MCF 10A (cell line): ENCODE measurements at regions of chr21 and their contacts with region 1.

Region 1: GRCh38 chr21:26124421-26124833 is 46.1 kb downstream of the APP start:
- DNase-seq: peak; percentile 41
- H3K4me3 Mint-ChIP-seq: peak overlapping the region; percentile 26
- H3K27ac Mint-ChIP-seq: peak overlapping the region; percentile 84
- H3K4me1 Mint-ChIP-seq: peaks cover 63% of the 10 kb centered on the region
- H3K27me3 Mint-ChIP-seq: no peaks in the 10 kb centered on the region
- CTCF ChIP-seq: no peak

Region 2: GRCh38 chr21:26072666-26073615 is 51.5 kb before region 1 on chr21:
- CTCF ChIA-PET with region 1: no interaction called
- POLR2A ChIA-PET with region 1: no interaction called
- intact Hi-C with region 1: no loop called
- DNase-seq: no peak
- H3K4me3 Mint-ChIP-seq: no peak overlapping the region
- H3K27ac Mint-ChIP-seq: no peak overlapping the region
- H3K4me1 Mint-ChIP-seq: peaks cover 31% of the 10 kb centered on the region
- H3K27me3 Mint-ChIP-seq: no peaks in the 10 kb centered on the region
- CTCF ChIP-seq: no peak

Region 3: DNA sequence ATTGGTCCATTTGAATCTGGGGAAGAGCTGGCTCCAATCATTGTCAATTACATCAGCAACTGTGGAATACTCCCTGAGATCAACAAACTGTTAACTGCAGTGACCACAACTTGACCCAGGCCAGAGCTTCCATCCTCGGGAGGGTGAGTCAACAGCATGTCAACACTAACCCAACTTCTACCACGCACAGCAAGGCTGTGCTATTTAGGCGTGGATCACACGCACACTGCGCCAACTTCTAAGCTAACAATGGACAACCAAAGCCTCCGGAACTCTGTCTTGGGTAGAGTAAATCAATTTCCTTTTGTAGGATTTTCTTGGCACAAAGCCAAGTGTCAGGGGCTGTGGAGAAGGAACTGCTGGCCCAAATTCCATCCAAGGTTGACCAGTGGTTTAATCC is 15.8 kb after region 1 on chr21:
- CTCF ChIA-PET with region 1: interaction called, 5 read pairs
- POLR2A ChIA-PET with region 1: interaction called, 13 read pairs
- intact Hi-C with region 1: no loop called
- DNase-seq: peak; percentile 91
- H3K4me3 Mint-ChIP-seq: peak overlapping the region; percentile 14
- H3K27ac Mint-ChIP-seq: peak overlapping the region; percentile 85
- H3K4me1 Mint-ChIP-seq: peaks cover 20% of the 10 kb centered on the region
- H3K27me3 Mint-ChIP-seq: no peaks in the 10 kb centered on the region
- CTCF ChIP-seq: no peak

Region 4: DNA sequence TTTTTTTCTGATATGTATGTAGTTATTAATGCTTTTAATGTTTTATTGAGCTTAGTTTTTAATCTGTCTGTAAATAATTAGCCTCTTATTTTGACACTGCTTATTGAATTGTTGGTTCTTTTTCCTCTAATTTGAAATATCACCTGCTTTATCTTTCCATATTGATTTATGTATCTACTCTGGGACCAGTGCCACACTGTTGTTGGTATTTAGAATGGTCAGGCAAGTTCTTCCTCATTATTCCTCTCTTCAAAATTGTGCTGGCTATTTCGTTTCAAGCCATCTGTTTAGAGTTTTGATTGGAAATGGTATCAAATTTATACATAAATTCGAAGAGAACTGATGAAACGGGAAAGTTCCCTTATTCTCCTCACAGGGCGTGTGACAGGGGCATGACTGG is 143.0 kb after region 1 on chr21:
- CTCF ChIA-PET with region 1: no interaction called
- POLR2A ChIA-PET with region 1: no interaction called
- intact Hi-C with region 1: no loop called
- DNase-seq: no peak
- H3K4me3 Mint-ChIP-seq: no peak overlapping the region
- H3K27ac Mint-ChIP-seq: no peak overlapping the region
- H3K4me1 Mint-ChIP-seq: peaks cover 6% of the 10 kb centered on the region
- H3K27me3 Mint-ChIP-seq: no peaks in the 10 kb centered on the region
- CTCF ChIP-seq: no peak

Region 5: DNA sequence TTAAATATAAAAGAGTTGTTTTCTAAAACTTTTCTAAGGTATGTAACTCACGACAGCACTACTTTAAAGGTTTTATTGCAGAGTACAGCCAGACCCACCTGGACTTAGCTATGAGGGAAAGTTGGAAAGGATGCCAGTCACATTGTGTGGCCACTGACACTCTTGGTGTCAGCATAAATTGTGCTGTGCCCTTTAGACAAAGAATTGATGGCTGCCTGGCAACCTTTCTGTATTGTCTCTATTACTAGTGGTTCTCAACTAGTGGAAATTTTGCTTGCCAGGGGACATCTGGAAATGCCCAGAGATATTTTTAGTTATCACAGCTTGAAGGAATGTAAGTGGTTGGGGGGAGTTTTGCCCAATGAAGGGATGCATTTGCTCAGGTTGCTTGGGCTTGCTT is 163.6 kb after region 1 on chr21:
- CTCF ChIA-PET with region 1: no interaction called
- POLR2A ChIA-PET with region 1: no interaction called
- intact Hi-C with region 1: no loop called
- DNase-seq: no peak
- H3K4me3 Mint-ChIP-seq: no peak overlapping the region
- H3K27ac Mint-ChIP-seq: no peak overlapping the region
- H3K4me1 Mint-ChIP-seq: no peaks in the 10 kb centered on the region
- H3K27me3 Mint-ChIP-seq: no peaks in the 10 kb centered on the region
- CTCF ChIP-seq: no peak